Endothelial cell of umbilical vein (primary cell): ENCODE measurements at regions of chr7 and their contacts with region 1.

Region 1: DNA sequence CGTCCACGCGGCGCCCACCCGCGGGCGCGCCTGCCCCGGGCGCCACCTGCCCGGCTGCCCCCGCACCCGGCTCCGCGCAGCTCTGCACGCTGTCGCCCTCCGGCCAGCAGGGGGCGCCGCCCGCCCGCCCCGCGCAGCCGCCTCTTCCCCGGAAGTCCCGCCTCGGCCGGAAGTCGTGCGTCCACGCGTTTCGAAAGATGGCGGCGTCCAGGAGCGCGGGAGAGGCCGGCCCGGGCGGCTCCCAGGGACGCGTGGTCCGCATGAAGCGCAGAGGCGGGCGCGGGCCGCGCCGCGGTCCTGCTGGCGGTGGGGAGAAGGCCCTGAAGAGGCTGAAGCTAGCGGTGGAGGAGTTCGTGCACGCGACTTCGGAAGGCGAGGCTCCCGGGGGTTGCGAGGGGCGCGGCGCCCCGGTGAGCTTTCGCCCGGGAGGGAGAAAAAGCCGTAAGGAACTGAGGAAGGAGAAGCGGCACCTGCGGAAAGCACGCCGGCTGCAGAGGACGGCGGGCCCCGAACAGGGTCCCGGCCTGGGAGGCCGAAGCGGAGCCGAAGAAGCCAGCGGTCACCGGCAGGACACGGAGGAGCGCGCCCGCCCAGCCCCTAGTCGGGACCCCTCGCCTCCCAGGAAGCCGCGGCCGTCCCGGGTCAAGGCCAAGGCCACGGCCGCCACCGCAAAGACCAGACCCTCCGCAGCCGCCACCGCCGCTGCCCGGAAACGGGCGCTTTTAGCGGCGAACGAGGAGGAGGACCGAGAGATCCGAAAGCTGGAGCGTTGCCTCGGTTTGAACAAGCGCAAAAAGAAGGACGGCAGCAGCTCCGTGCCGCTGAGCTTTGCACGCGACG is at the start of gene NOM1:
- DNase-seq: peak; percentile 80
- H3K4me3 ChIP-seq: peak within 1 kb of the TSS; percentile 72 to 92 (median 83)
- H3K27ac ChIP-seq: peak within 1 kb of the TSS; percentile 49
- H3K4me1 ChIP-seq: peaks cover 21% of the 10 kb centered on the region
- H3K27me3 ChIP-seq: peaks cover under 1 to 1% of the 10 kb centered on the region in 2 experiments
- CTCF ChIP-seq: peak; percentile 72 to 79
- POLR2A ChIP-seq: peak; percentile 79
- total RNA-seq, gene NOM1: 36.7 and 38.6 TPM in 2 replicates

Region 2: GRCh38 chr7:156892821-156893706 is 56.7 kb before region 1 on chr7 and contains the start of gene LMBR1:
- CTCF ChIA-PET with region 1: interaction called, 19 read pairs
- POLR2A ChIA-PET with region 1: interaction called, 5 read pairs
- dilution Hi-C with region 1: no loop called
- intact Hi-C with region 1: loop called (anchors 1 kb)
- DNase-seq: peak; percentile 96
- H3K4me3 ChIP-seq: peak within 1 kb of the TSS; percentile 90 to 94 (median 91)
- H3K27ac ChIP-seq: peak within 1 kb of the TSS; percentile 83
- H3K4me1 ChIP-seq: peaks cover 19% of the 10 kb centered on the region
- H3K27me3 ChIP-seq: no peaks in the 10 kb centered on the region
- CTCF ChIP-seq: peak; percentile 35 to 66
- POLR2A ChIP-seq: peak; percentile 79
- total RNA-seq, gene LMBR1: 57.7 and 72.9 TPM in 2 replicates

Region 3: DNA sequence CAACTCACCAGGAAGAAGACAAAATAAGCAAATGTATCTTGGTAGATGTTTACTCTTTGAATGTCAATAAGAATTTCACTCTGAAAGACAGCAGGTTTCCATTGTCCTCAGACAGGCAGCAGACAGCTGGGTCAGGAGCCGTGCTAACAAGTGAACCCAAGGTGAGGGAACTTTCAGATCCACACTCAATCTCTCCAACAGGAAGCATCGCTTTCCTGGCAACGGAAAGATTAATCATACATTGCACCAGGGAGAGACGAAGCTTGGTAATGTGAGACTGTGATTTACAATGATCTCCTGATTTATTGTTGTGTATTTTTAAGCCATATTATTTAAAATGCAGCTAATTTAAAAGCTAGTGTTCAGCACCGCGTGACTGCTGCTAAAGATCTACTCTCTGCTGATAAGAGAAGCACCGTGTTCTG is 17.8 kb before region 1 on chr7:
- CTCF ChIA-PET with region 1: interaction called, 22 read pairs
- POLR2A ChIA-PET with region 1: no interaction called
- dilution Hi-C with region 1: no loop called
- intact Hi-C with region 1: loop called (anchors 1 kb)
- DNase-seq: peak; percentile 97
- H3K4me3 ChIP-seq: peak overlapping the region in 1 of 3 experiments; percentile 24
- H3K27ac ChIP-seq: peak overlapping the region; percentile 82
- H3K4me1 ChIP-seq: peaks cover 34% of the 10 kb centered on the region
- H3K27me3 ChIP-seq: no peaks in the 10 kb centered on the region
- CTCF ChIP-seq: no peak
- POLR2A ChIP-seq: peak; percentile 27

Region 4: DNA sequence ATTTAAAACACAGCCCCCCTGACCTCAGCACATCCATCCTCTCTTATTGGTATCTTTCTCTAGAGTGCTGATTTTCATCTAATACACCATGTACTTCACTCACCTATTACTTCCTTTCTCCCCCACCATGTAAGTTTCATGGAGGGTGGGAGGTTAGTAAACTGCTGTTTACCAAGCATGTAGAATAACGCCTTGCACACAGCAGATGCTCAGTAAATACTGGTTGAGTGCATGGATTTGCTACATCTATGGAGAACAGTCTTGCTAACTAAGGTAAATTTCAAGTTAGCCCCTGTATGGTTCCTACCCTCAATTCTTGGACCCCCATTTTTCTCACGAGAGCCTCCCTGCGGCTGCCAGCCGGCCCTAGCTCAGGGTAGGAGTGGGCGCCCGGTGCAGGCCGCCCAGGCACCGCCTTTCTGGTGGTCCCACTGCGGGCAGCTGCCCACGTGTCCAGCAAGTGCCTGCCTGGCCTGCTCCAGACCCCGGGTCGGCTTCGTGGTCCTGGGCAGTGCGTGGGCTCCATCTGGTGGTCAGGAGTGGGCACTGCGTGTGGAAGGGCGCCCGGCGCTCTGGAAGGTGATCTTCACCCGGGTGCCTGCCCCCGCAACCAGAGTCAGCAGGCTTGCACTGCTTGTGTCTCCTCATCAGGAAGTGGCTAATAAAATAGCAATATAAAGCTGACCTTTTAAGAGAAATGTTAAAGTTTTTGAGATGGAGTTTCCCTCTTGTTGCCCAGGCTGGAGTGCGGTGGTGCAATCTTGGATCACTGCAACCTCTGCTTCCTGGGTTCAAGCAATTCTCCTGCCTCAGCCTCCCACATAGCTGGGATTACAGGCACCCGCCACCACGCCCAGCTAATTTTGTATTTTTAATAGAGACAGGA is 323.7 kb after region 1 on chr7:
- CTCF ChIA-PET with region 1: no interaction called
- POLR2A ChIA-PET with region 1: no interaction called
- dilution Hi-C with region 1: no loop called
- intact Hi-C with region 1: loop called (anchors 5 kb)
- DNase-seq: peak; percentile 76
- H3K4me3 ChIP-seq: no peak overlapping the region
- H3K27ac ChIP-seq: no peak overlapping the region
- H3K4me1 ChIP-seq: peaks cover 14% of the 10 kb centered on the region
- H3K27me3 ChIP-seq: no peaks in the 10 kb centered on the region
- CTCF ChIP-seq: peak; percentile 95 to 99
- POLR2A ChIP-seq: no peak